ENCODE measurements at regions of chr7 and their contacts with region 1.

Region 1: DNA sequence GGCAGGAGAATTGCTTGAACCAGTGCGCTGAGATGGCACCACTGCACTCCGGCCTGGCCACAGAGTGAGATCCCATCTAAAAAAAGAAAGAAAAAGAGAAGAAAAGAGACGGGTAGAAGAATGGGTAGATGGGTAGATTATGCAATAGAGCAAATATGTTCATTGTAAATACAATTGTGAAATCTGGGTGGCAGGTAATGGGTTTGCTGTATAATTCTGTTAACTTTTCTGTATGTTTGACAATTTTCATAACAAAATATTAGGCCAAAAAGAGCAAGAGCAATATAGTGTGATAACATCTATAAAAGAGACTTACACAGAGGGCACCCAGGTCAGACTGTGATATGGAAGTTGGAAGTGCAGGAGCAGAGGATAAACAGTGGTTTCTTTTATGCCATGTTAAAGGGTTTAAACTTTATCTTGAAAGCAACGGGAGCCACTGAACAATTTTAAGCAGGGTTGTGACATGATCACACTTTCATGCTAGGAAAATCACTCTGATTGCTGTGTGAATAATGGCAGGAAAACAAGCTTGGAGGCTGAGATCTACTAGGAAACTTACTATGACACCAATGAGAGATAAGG is 6.7 kb upstream of the COL28A1 start:
- DNase-seq: no peak
- H3K4me3 ChIP-seq: no peak overlapping the region
- H3K27ac ChIP-seq: no peak overlapping the region
- H3K4me1 ChIP-seq: peaks cover 0 to 8% (median 0%) of the 10 kb centered on the region in 4 donors
- H3K27me3 ChIP-seq: no peaks in the 10 kb centered on the region
- CTCF ChIP-seq: no peak
- EP300 ChIP-seq: no peak
- POLR2A ChIP-seq: no peak

Region 2: DNA sequence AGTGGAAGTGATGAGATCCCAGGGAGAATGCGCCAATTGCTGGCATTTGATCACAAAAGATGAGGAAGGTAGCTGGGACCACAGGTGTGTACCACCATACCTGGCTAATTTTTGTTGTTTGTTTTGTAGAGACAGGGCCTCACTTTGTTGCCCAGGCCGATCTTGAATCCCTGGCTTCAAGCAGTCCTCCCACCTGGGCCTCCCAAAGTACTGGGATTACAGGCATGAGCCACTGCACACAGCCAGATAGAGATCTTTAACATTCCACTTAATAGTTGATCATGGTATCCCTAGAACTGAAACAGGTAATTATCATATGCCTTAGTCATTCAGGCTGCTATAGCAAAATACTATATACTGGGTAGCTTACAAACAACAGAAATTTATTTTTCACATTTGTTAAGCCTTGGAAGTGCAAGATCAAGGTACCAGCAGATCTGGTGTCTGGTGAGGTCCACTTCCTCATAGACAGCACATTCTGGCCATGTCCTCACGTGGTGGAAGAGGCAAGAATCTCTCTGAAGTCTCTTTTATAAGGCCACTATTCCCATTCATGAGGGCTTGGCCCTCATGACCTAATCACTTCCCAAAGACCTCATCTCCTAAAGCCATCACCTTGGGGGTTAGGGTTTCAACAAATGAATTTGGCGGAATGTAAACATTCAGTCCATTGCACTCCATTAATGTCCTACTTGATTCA is 497.7 kb before region 1 on chr7:
- intact Hi-C with region 1: no loop called
- DNase-seq: no peak
- H3K4me3 ChIP-seq: no peak overlapping the region
- H3K27ac ChIP-seq: no peak overlapping the region
- H3K4me1 ChIP-seq: no peaks in the 10 kb centered on the region
- H3K27me3 ChIP-seq: no peaks in the 10 kb centered on the region
- CTCF ChIP-seq: no peak
- EP300 ChIP-seq: no peak
- POLR2A ChIP-seq: no peak

Region 3: DNA sequence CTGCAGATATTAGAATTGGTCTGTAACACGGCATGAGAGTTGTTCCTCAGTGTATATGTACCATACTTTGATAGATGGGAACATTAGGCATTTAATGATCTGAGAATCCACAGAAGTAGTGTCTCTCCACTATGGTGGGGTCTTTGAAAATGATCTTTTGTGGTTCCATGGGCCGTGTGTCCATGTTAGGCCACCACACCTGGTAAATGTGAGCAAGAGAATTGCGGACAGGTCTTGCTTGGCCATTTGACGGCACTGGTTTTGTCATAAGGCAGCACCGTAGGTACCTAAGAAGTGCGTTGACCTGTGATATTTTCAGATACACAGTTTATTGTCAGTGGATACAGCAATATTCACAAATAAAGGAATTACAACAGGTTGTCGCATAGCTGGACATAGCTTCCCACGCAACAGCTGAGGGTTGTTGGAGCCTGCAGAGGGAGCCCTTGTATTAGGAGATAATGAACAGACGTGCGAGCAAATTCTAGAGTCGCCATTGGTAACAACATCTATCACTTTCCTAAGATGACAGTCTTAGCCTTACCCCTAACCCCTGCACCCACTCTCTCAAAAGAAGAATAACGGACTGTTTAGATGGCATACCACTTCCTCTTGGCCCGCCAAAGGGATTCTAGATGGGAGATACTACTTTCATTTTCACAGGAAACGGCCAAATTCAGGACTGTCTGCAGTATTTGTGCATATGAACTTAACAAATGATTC is 118.0 kb before region 1 on chr7:
- intact Hi-C with region 1: loop called (anchors 5 kb)
- DNase-seq: peak; percentile 69 to 88
- H3K4me3 ChIP-seq: peak overlapping the region; percentile 46 to 51 (median 48)
- H3K27ac ChIP-seq: peak overlapping the region in 3 of 5 donors; percentile 8 to 65 (median 50)
- H3K4me1 ChIP-seq: peaks cover 0 to 24% (median 13%) of the 10 kb centered on the region in 4 donors
- H3K27me3 ChIP-seq: no peaks in the 10 kb centered on the region
- CTCF ChIP-seq: peak in 5 of 7 experiments; percentile 50 to 70 (median 68)
- EP300 ChIP-seq: no peak
- POLR2A ChIP-seq: no peak

Region 4: GRCh38 chr7:7746458-7746857 is 204.1 kb after region 1 on chr7:
- intact Hi-C with region 1: no loop called
- DNase-seq: peak in 1 of 2 donors; percentile 22
- H3K4me3 ChIP-seq: no peak overlapping the region
- H3K27ac ChIP-seq: no peak overlapping the region
- H3K4me1 ChIP-seq: peaks cover 3 to 47% (median 20%) of the 10 kb centered on the region in 4 donors
- H3K27me3 ChIP-seq: no peaks in the 10 kb centered on the region
- CTCF ChIP-seq: no peak
- EP300 ChIP-seq: no peak
- POLR2A ChIP-seq: no peak

Region 5: GRCh38 chr7:7808156-7808555 is 265.8 kb after region 1 on chr7:
- intact Hi-C with region 1: no loop called
- DNase-seq: no peak
- H3K4me3 ChIP-seq: no peak overlapping the region
- H3K27ac ChIP-seq: no peak overlapping the region
- H3K4me1 ChIP-seq: peaks cover 0 to 6% (median 3%) of the 10 kb centered on the region in 4 donors
- H3K27me3 ChIP-seq: no peaks in the 10 kb centered on the region
- CTCF ChIP-seq: no peak
- EP300 ChIP-seq: no peak
- POLR2A ChIP-seq: no peak

Region 6: DNA sequence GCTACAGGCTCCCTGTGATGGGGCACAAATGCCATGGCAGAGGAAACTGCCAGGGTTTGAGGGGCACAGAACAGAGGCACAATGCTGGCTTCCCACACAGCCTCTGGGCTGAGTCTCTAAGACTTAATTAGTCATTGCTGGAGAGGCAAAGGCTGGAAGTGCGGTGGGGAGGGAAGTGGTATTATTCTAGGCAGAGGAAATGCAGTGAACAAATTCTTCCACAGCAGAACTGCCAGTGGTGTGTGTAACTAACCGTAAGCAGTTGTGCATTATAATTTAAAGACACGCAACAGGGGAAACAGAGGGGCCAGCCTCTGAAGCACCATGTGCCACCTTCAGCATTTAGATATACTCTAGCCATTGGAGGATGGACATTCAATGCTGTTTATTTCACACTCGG is 706.8 kb after region 1 on chr7:
- intact Hi-C with region 1: no loop called
- DNase-seq: no peak
- H3K4me3 ChIP-seq: no peak overlapping the region
- H3K27ac ChIP-seq: no peak overlapping the region
- H3K4me1 ChIP-seq: peaks cover 0 to 6% (median 4%) of the 10 kb centered on the region in 4 donors
- H3K27me3 ChIP-seq: no peaks in the 10 kb centered on the region
- CTCF ChIP-seq: no peak
- EP300 ChIP-seq: no peak
- POLR2A ChIP-seq: no peak